Caco-2 (cell line): ENCODE measurements at regions of chr7 and their contacts with region 1.

Region 1: GRCh38 chr7:157423348-157423747 is 86.5 kb downstream of the DNAJB6 start:
- DNase-seq: no peak
- H3K4me3 ChIP-seq: no peak overlapping the region
- H3K4me3 Mint-ChIP-seq: no peak overlapping the region
- H3K27ac Mint-ChIP-seq: no peak overlapping the region
- H3K4me1 ChIP-seq: no peaks in the 10 kb centered on the region
- H3K4me1 Mint-ChIP-seq: no peaks in the 10 kb centered on the region
- H3K27me3 ChIP-seq: no peaks in the 10 kb centered on the region
- H3K27me3 Mint-ChIP-seq: no peaks in the 10 kb centered on the region
- CTCF ChIP-seq: no peak

Region 2: GRCh38 chr7:157397731-157398691 is 25.3 kb before region 1 on chr7:
- CTCF ChIA-PET with region 1: no interaction called
- POLR2A ChIA-PET with region 1: no interaction called
- intact Hi-C with region 1: loop called (anchors 2 kb)
- DNase-seq: peak; percentile 78 to 79
- H3K4me3 ChIP-seq: no peak overlapping the region
- H3K4me3 Mint-ChIP-seq: peak overlapping the region; percentile 45
- H3K27ac Mint-ChIP-seq: peak overlapping the region; percentile 70
- H3K4me1 ChIP-seq: peaks cover 14% of the 10 kb centered on the region
- H3K4me1 Mint-ChIP-seq: peaks cover 19% of the 10 kb centered on the region
- H3K27me3 ChIP-seq: no peaks in the 10 kb centered on the region
- H3K27me3 Mint-ChIP-seq: no peaks in the 10 kb centered on the region
- CTCF ChIP-seq: peak; percentile 66 to 72